ENCODE measurements at regions of chr1 and their contacts with region 1.

Region 1: GRCh38 chr1:40032240-40032891 is 8.2 kb upstream of the CAP1 start:
- DNase-seq: peak; percentile 21 to 63
- ATAC-seq: peak; percentile 32 to 67 (median 62)
- H3K4me3 ChIP-seq: no peak overlapping the region
- H3K27ac ChIP-seq: peak overlapping the region; percentile 12
- H3K4me1 ChIP-seq: peaks cover 30% of the 10 kb centered on the region
- H3K27me3 ChIP-seq: no peaks in the 10 kb centered on the region
- CTCF ChIP-seq: peak; percentile 44

Region 2: DNA sequence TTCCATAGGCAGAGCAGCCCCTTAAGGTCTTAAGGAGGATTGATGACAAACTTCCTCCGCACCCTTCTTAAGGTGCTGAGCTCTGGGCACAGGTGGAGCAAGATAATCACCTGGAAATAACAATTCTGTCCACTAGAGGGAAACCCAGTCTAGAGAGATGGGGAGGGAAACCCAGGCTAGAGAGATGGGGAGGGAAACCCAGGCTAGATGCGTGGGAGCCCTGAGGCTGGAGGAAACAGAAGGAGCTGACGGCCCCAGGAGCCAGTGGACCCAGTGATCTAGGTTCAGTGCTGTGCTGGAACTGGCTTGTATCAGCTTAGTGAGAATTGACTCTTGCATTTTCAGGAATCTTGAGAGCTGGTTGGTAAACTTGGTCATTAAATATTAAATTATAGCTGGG is 112.8 kb before region 1 on chr1:
- intact Hi-C with region 1: loop called in 1 of 2 experiments (anchors 10 kb)
- DNase-seq: no peak
- ATAC-seq: peak; percentile 71 to 86 (median 80)
- H3K4me3 ChIP-seq: no peak overlapping the region
- H3K27ac ChIP-seq: no peak overlapping the region
- H3K4me1 ChIP-seq: no peaks in the 10 kb centered on the region
- H3K27me3 ChIP-seq: peaks cover 0 to 12% (median 5%) of the 10 kb centered on the region in 3 donors
- CTCF ChIP-seq: peak; percentile 49

Measured in psoas muscle (tissue), 8 donors.